ENCODE measurements at regions of chr22 and their contacts with region 1.

Region 1: GRCh38 chr22:38051900-38052862 is 5.0 kb upstream of the PICK1 start:
- DNase-seq: peak; percentile 74
- H3K4me3 ChIP-seq: no peak overlapping the region
- H3K27ac ChIP-seq: no peak overlapping the region
- H3K4me1 ChIP-seq: peaks cover 4% of the 10 kb centered on the region
- H3K27me3 ChIP-seq: peaks cover 0 to 2% of the 10 kb centered on the region in 2 experiments
- CTCF ChIP-seq: peak; percentile 79 to 88
- POLR2A ChIP-seq: no peak

Region 2: GRCh38 chr22:37880668-37881440 is 171.3 kb before region 1 on chr22:
- CTCF ChIA-PET with region 1: no interaction called
- POLR2A ChIA-PET with region 1: no interaction called
- dilution Hi-C with region 1: no loop called
- intact Hi-C with region 1: no loop called
- DNase-seq: peak; percentile 75
- H3K4me3 ChIP-seq: no peak overlapping the region
- H3K27ac ChIP-seq: peak overlapping the region; percentile 80
- H3K4me1 ChIP-seq: peaks cover 10% of the 10 kb centered on the region
- H3K27me3 ChIP-seq: no peaks in the 10 kb centered on the region
- CTCF ChIP-seq: no peak
- POLR2A ChIP-seq: no peak

Region 3: GRCh38 chr22:38034274-38034882 is 17.8 kb before region 1 on chr22:
- CTCF ChIA-PET with region 1: interaction called, 24 read pairs
- POLR2A ChIA-PET with region 1: no interaction called
- dilution Hi-C with region 1: no loop called
- intact Hi-C with region 1: no loop called
- DNase-seq: peak; percentile 77
- H3K4me3 ChIP-seq: no peak overlapping the region
- H3K27ac ChIP-seq: peak overlapping the region; percentile 28
- H3K4me1 ChIP-seq: peaks cover 12% of the 10 kb centered on the region
- H3K27me3 ChIP-seq: no peaks in the 10 kb centered on the region
- CTCF ChIP-seq: no peak
- POLR2A ChIP-seq: no peak

Region 4: DNA sequence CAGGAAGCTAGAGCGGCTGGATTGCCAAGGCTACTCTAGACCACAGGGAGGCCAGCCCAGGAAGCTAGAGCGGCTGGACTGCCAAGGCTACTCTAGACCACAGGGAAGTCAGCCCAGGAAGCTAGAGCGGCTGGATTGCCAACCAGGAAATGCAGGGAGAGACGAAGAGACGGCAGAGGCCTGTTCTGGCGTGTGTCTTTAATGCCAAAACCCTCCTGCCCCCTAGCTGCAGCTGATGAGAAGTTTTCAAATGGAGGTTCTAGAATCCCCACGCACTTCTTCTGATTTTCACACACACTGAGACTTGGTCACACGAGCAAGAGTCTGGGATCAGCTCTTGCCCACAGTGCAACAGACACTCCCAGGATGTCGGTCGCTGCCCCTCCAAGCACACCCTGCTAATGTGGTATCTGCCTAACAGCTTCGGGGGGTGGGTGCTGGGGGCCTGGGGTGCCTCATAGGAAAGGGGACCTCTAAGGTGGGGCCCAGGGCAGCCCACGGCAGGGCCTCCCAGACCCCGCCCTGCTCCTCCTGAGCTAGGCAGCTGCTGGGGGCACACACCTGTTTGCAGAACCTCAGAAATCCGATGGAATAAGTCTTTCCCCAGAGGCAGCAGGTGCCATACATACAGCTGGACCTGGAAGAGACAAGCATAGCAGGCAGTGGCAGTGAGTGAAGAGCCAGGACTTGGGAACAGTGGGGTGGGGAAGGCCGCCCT is 178.1 kb after region 1 on chr22:
- CTCF ChIA-PET with region 1: interaction called, 20 read pairs
- POLR2A ChIA-PET with region 1: no interaction called
- dilution Hi-C with region 1: no loop called
- intact Hi-C with region 1: no loop called
- DNase-seq: peak; percentile 85
- H3K4me3 ChIP-seq: no peak overlapping the region
- H3K27ac ChIP-seq: peak overlapping the region; percentile 77
- H3K4me1 ChIP-seq: peaks cover 41% of the 10 kb centered on the region
- H3K27me3 ChIP-seq: no peaks in the 10 kb centered on the region
- CTCF ChIP-seq: peak; percentile 59 to 70
- POLR2A ChIP-seq: no peak

Region 5: DNA sequence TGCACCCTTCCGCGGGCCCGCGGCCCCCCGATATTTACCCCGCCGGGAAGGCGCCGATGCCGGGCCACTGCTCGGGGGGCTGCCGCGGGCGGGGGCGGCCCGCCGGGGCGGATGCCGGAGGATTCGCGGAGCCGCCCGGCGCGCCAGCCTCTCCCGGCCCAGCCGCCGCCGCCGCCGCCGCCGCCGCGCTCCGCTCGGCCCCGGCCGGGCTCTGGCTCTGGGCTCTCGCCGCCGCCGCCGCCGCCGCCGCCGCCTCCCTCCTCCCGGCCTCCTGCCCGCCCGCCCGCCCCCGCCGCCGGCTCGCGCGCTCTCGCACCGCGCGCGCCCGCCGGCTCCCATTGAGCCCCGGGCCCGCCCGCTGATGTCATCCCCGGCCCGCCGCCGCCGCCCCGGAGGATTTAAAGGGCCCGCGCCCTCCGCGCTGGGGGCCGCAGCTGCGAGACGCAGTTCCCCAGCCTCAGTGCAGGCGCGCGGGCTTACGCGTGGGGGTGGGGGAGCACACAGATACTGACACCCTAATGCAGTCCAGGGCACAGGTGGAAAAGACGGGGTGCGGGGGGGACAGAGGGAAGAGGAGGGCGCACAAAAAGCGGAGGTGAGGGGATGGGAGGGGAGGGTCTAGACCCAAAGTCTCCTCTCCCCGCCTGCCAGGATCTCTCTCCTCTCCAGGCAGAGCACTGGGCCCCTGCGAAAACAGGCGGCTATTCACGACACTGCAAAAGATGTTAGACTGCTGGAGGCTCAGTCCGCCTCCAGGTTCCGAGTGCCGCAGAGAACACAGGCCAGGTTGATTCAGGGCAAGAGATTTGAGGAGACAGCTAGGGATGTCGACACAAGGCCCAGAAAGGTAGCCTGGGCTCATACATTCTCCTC is 265.2 kb after region 1 on chr22 and contains the start of gene CSNK1E:
- CTCF ChIA-PET with region 1: interaction called, 10 read pairs
- POLR2A ChIA-PET with region 1: no interaction called
- dilution Hi-C with region 1: no loop called
- intact Hi-C with region 1: no loop called
- DNase-seq: peak; percentile 47
- H3K4me3 ChIP-seq: peak within 1 kb of the TSS; percentile 84 to 98 (median 94)
- H3K27ac ChIP-seq: peak within 1 kb of the TSS; percentile 80
- H3K4me1 ChIP-seq: peaks cover 45% of the 10 kb centered on the region
- H3K27me3 ChIP-seq: no peaks in the 10 kb centered on the region
- CTCF ChIP-seq: no peak
- POLR2A ChIP-seq: no peak
- total RNA-seq, gene CSNK1E: 261 and 262 TPM in 2 replicates

Region 6: GRCh38 chr22:38479096-38479837 is 427.1 kb after region 1 on chr22:
- CTCF ChIA-PET with region 1: interaction called, 6 read pairs
- POLR2A ChIA-PET with region 1: no interaction called
- dilution Hi-C with region 1: no loop called
- intact Hi-C with region 1: loop called (anchors 5 kb)
- DNase-seq: no peak
- H3K4me3 ChIP-seq: no peak overlapping the region
- H3K27ac ChIP-seq: no peak overlapping the region
- H3K4me1 ChIP-seq: no peaks in the 10 kb centered on the region
- H3K27me3 ChIP-seq: no peaks in the 10 kb centered on the region
- CTCF ChIP-seq: no peak
- POLR2A ChIP-seq: no peak

Measured in endothelial cell of umbilical vein (primary cell).